Lower leg skin (tissue), 4 donors: ENCODE measurements at regions of chr1 and their contacts with region 1.

Region 1: DNA sequence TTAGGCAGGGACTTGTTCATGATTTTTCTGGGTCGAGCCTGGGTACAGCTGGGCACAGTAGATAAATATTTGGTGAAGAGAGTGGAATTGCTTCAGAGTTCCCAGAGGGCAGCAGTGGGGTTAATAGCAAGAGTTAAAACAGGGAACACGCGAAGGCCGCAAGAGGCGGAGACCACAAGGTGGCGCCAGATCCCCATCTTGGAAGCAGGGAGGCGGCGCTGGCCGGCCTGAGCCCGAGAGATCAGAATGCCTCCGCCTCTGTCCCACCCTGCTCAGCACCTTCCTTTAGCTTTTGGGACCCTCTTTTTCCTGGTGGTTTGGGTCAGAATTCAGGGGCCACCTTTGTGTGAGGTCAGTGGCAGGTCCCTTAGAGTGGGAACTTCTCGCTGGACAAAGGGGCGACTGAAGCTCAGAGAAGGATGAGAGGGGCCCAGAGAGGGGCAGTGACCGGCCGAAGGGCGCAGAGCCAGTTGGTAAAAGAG is 6.5 kb upstream of the PADI2 start:
- DNase-seq: peak; percentile 78 to 97
- H3K4me3 ChIP-seq: no peak overlapping the region
- CTCF ChIP-seq: no peak
- POLR2A ChIP-seq: no peak

Region 2: DNA sequence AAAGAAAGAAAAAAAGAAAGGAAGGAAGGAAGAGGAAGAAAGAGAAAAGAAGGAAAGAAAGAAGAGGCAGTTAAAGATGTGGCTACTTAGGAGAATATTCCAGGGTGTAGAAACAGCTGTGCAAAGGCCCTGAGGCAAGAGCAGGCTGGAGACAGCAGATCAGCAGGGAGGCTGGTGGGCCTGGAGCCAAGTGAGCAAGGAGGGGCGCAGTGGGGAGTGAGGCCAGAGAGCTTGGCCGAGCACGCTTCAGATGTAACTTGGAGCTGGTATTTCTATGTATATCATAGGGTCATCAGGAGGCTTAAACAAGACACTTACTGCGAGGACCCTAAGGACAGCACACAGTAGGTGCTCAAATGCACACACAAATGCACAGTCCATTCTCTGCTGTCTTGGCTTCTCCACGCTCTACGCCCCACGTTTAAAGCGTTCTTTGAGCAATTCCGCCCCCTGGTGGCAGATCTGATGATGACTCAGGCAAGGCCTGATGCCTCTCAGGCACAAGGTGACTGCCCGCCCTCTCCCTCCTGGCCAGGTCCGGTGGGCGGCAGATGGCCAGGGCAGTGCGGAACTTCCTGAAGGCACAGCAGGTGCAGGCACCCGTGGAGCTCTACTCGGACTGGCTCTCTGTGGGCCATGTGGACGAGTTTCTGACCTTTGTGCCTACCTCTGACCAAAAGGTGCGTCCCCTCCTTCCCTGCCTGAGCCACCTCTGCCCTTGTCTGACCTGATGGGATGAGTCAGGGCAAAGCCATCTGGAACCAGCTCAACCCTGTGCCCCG is 111.2 kb after region 1 on chr1:
- intact Hi-C with region 1: loop called (anchors 2 kb)
- DNase-seq: peak; percentile 77 to 97
- H3K4me3 ChIP-seq: no peak overlapping the region
- CTCF ChIP-seq: peak in 1 of 3 donors; percentile 88
- POLR2A ChIP-seq: no peak

Region 3: GRCh38 chr1:17335821-17336710 is 210.3 kb after region 1 on chr1:
- intact Hi-C with region 1: loop called (anchors 10 kb)
- DNase-seq: peak; percentile 46 to 88
- H3K4me3 ChIP-seq: no peak overlapping the region
- CTCF ChIP-seq: no peak
- POLR2A ChIP-seq: no peak